Colonic mucosa (tissue), 4 donors: ENCODE measurements at regions of chr16 and their contacts with region 1.

Region 1: DNA sequence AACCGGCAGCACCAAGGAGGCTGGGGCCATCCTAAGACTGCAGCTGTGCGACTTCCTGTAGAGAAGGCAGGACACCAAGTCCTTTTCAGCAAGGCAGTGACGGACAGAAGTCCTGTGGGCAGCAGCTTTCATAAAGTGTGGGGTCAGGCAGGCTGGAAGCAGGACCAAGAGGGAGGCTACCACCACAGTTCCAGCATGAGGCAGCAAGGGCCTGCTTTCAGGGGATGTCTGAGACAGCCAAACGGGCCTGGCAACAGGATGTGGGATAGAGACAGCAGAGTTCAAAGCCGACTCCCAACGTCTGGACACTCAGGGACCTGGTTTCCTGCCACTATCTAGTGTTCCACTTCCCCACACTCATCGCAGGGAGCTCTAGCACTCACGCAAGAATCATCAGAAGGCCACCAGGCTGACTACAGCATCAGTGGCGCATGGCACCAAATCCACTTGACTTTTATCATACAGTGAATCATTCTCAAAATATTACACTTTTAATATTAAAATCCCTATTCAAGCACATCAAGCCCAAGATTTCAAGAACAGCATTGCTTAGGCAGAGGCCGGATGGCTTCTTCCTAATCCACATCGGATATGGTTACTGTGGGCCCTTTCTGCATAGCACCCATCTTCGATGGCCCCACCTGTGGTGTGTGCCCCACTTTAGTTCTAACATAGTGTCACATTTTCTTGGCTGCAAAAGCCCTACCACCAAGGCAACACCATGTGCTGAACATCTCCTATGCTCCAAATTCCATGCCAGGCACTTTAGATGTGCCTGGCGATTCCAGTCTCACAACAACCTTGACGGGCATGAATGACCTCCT is 5.2 kb downstream of the USP7 start:
- DNase-seq: peak; percentile 44
- H3K4me3 ChIP-seq: no peak overlapping the region
- H3K27ac ChIP-seq: peak overlapping the region; percentile 68
- H3K4me1 ChIP-seq: peaks cover 45% of the 10 kb centered on the region
- H3K27me3 ChIP-seq: no peaks in the 10 kb centered on the region
- CTCF ChIP-seq: no peak

Region 2: GRCh38 chr16:8740775-8741355 is 217.7 kb before region 1 on chr16:
- intact Hi-C with region 1: no loop called
- DNase-seq: peak; percentile 45
- H3K4me3 ChIP-seq: no peak overlapping the region
- H3K27ac ChIP-seq: no peak overlapping the region
- H3K4me1 ChIP-seq: no peaks in the 10 kb centered on the region
- H3K27me3 ChIP-seq: no peaks in the 10 kb centered on the region
- CTCF ChIP-seq: no peak

Region 3: GRCh38 chr16:8924214-8924613 is 34.3 kb before region 1 on chr16:
- intact Hi-C with region 1: loop called (anchors 5 kb)
- DNase-seq: peak; percentile 81
- H3K4me3 ChIP-seq: no peak overlapping the region
- H3K27ac ChIP-seq: peak overlapping the region; percentile 22
- H3K4me1 ChIP-seq: peaks cover 20% of the 10 kb centered on the region
- H3K27me3 ChIP-seq: no peaks in the 10 kb centered on the region
- CTCF ChIP-seq: no peak